GM12878 (cell line): ENCODE measurements at regions of chr6 and their contacts with region 1.

Region 1: DNA sequence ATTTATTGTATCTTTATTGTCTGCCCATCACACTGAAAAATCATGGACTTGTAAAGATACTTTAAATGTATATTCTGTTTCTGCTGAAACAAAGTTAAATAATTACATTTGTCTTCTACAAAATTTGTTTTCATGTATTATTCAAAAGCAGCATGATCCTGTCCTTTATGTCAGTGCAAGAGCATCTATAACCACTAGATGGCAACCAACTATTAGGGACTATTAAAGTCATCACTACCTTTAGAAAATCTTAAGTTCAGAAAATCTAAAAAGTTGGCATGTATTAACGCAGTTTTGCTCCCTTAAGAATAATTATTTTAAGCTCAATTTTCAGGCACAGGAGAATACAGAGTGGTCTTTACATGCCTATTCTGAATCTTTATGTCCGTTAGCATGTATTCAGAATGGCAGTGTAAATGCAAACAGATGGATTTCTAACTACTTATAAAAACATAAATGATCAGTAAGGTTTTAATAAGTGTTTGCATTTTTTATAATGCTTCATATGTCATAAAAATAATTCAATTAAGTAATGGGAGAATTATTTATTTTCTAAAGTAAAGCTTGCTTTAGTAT is 17.8 kb downstream of the TMEM30A start:
- DNase-seq: no peak
- ATAC-seq: peak; percentile 76
- H3K4me3 ChIP-seq: no peak overlapping the region
- H3K27ac ChIP-seq: no peak overlapping the region
- H3K4me1 ChIP-seq: no peaks in the 10 kb centered on the region
- H3K27me3 ChIP-seq: no peaks in the 10 kb centered on the region
- CTCF ChIP-seq: peak; percentile 65 to 74 (median 74); a peak in 5 of 6 replicates
- EP300 ChIP-seq: no peak
- POLR2A ChIP-seq: no peak
- RAD21 ChIP-seq: peak; percentile 82

Region 2: GRCh38 chr6:75130784-75131183 is 136.0 kb before region 1 on chr6:
- CTCF ChIA-PET with region 1: no interaction called
- POLR2A ChIA-PET with region 1: no interaction called
- RAD21 ChIA-PET with region 1: no interaction called
- SMC1A ChIA-PET with region 1: no interaction called
- in situ Hi-C with region 1: no loop called
- intact Hi-C with region 1: no loop called
- DNase-seq: no peak
- ATAC-seq: no peak
- H3K4me3 ChIP-seq: no peak overlapping the region
- H3K27ac ChIP-seq: no peak overlapping the region
- H3K4me1 ChIP-seq: no peaks in the 10 kb centered on the region
- H3K27me3 ChIP-seq: no peaks in the 10 kb centered on the region; a peak in 1 of 4 replicates
- CTCF ChIP-seq: no peak
- EP300 ChIP-seq: no peak
- POLR2A ChIP-seq: no peak
- RAD21 ChIP-seq: no peak

Region 3: GRCh38 chr6:75243333-75244062 is 23.3 kb before region 1 on chr6 and contains the start of gene COX7A2:
- CTCF ChIA-PET with region 1: interaction called, 14 read pairs
- POLR2A ChIA-PET with region 1: interaction called, 3 read pairs
- RAD21 ChIA-PET with region 1: interaction called, 6 read pairs
- SMC1A ChIA-PET with region 1: interaction called, 8 read pairs
- in situ Hi-C with region 1: no loop called
- intact Hi-C with region 1: no loop called
- DNase-seq: peak; percentile 86
- ATAC-seq: peak; percentile 94
- H3K4me3 ChIP-seq: peak within 1 kb of the TSS; percentile 65
- H3K27ac ChIP-seq: peak within 1 kb of the TSS; percentile 97
- H3K4me1 ChIP-seq: no peaks in the 10 kb centered on the region
- H3K27me3 ChIP-seq: no peaks in the 10 kb centered on the region
- CTCF ChIP-seq: no peak
- EP300 ChIP-seq: no peak; a peak in 3 of 4 replicates
- POLR2A ChIP-seq: peak; percentile 97
- RAD21 ChIP-seq: no peak
- polyA plus RNA-seq, gene COX7A2: 1,615 to 1,834 TPM

Region 4: DNA sequence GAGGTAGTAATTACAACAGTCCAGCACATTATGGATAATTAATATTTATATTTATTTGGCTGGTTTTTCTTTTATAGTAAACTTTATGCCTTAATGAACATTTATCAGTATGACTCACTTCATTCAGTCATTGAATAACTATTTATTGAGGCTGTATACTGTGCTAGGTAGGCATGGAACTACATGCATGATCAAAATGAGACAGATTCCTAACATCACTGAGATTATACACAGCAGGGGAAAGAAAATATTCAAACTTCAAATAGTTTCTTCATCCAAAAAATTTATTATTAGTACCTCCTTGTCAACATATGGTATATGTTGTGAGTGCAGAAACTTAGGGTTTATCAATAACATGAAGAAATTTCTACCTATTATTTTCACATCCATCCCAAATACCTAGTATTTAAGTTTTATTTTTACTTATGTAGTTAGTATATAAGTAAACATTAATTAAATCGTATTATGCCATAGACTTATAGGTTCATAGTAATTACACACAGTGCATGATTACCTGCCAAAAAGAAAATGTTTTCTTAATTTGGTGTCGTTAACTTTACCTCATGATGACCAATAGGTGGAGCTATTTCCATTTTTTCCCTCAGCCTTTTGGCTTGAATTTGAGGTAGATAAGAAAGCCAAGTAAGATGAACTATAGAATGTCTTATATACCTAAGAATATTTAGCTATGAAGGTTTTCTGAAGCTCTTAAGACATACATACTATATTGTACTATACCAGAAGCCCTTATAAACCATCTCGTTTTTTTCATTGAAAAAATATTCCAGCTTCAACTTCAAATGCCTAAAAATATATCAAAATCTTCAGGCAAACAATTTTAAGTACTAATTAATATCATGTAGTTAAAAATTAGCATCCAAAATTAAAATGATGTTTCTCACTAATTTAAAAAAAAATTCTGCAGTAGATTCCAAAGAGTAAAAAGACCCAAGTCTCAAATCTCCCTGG is 30.3 kb after region 1 on chr6:
- CTCF ChIA-PET with region 1: interaction called, 50 read pairs
- POLR2A ChIA-PET with region 1: interaction called, 3 read pairs
- RAD21 ChIA-PET with region 1: interaction called, 54 read pairs
- SMC1A ChIA-PET with region 1: interaction called, 18 read pairs
- in situ Hi-C with region 1: no loop called
- intact Hi-C with region 1: no loop called
- DNase-seq: no peak
- ATAC-seq: peak; percentile 87
- H3K4me3 ChIP-seq: no peak overlapping the region
- H3K27ac ChIP-seq: no peak overlapping the region
- H3K4me1 ChIP-seq: no peaks in the 10 kb centered on the region
- H3K27me3 ChIP-seq: no peaks in the 10 kb centered on the region
- CTCF ChIP-seq: peak; percentile 53 to 75 (median 59); a peak in 5 of 6 replicates
- EP300 ChIP-seq: no peak
- POLR2A ChIP-seq: no peak
- RAD21 ChIP-seq: peak; percentile 87

Region 5: GRCh38 chr6:75368151-75368779 is 101.5 kb after region 1 on chr6:
- CTCF ChIA-PET with region 1: interaction called, 40 read pairs
- POLR2A ChIA-PET with region 1: no interaction called
- RAD21 ChIA-PET with region 1: interaction called, 12 read pairs
- SMC1A ChIA-PET with region 1: interaction called, 17 read pairs
- in situ Hi-C with region 1: no loop called
- intact Hi-C with region 1: no loop called
- DNase-seq: no peak
- ATAC-seq: peak; percentile 88
- H3K4me3 ChIP-seq: no peak overlapping the region
- H3K27ac ChIP-seq: no peak overlapping the region
- H3K4me1 ChIP-seq: no peaks in the 10 kb centered on the region
- H3K27me3 ChIP-seq: no peaks in the 10 kb centered on the region
- CTCF ChIP-seq: peak; percentile 46 to 56 (median 50); a peak in 5 of 6 replicates
- EP300 ChIP-seq: no peak
- POLR2A ChIP-seq: no peak
- RAD21 ChIP-seq: peak; percentile 69

Region 6: DNA sequence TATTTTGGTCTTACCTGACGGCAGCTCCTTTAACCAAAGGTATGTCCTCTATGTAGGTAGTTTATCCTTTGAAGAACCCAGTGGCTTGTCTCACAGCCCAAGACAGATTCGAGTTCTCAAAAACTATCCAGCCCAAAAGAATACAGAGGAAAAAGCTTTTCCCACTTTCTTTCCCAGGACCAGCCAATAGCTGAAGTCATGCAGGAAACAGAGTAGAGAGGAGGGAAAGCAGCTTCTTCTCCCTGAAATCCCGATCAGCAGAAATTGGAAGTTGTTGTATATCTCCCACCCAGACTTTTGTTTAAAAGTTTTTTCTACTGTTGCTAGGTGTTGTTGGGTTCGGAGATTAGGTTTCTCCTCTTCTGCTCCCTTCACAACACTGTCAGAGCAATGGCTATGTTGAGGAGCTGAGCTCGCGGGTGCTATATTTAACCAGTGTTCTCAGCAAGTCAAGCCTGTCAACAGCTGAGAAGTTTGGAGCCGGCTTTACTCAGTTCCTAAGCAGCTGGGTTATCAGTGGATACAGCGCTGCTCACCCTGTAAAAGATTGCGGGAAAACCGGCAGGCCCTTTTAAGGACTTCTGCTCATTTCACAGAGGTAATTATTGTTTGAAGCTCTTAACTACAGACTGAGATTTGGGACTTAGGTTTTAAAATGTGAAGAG is 226.7 kb after region 1 on chr6 and contains the start of gene FILIP1:
- CTCF ChIA-PET with region 1: interaction called, 11 read pairs
- POLR2A ChIA-PET with region 1: no interaction called
- RAD21 ChIA-PET with region 1: interaction called, 6 read pairs
- SMC1A ChIA-PET with region 1: interaction called, 15 read pairs
- in situ Hi-C with region 1: no loop called
- intact Hi-C with region 1: no loop called
- DNase-seq: no peak
- ATAC-seq: peak; percentile 44
- H3K4me3 ChIP-seq: peak within 1 kb of the TSS; percentile 39; the same call in 1 of the 2 replicates
- H3K27ac ChIP-seq: peak within 1 kb of the TSS; percentile 63
- H3K4me1 ChIP-seq: peaks cover 27% of the 10 kb centered on the region
- H3K27me3 ChIP-seq: no peaks in the 10 kb centered on the region
- CTCF ChIP-seq: no peak
- EP300 ChIP-seq: no peak
- POLR2A ChIP-seq: no peak
- RAD21 ChIP-seq: no peak
- polyA plus RNA-seq, gene FILIP1: 0.23 to 0.33 TPM

Region 7: DNA sequence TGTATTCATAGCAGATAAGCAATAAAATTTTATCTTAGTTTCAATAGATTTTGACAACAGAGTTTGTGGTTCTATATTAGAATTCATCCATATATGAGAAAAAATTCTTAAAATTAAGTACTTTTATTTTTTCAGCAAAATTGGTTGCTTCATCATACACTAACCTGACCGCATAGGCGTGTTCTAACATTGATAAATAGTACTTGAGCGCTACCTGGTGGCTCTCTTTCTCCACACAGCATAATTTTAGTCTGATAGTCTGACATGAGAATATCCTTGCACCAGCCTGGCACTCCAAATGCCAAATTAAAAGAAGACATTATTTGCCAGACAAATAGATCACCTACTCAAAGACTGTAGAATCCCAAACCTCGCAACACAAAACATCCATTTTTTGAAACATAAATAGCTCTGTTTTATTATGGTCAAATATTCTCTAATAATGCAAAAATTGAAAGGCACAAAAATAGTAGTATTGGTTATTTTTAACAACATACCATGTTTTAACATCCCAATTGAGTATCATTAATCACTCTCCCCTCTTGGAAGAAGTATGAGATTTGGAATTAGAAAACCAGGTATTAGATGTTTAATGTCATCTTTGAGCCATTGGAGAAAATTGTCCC is 259.8 kb after region 1 on chr6:
- CTCF ChIA-PET with region 1: interaction called, 43 read pairs
- POLR2A ChIA-PET with region 1: no interaction called
- RAD21 ChIA-PET with region 1: interaction called, 17 read pairs
- SMC1A ChIA-PET with region 1: interaction called, 38 read pairs
- in situ Hi-C with region 1: no loop called
- intact Hi-C with region 1: loop called (anchors 1 kb)
- DNase-seq: peak; percentile 40
- ATAC-seq: peak; percentile 97
- H3K4me3 ChIP-seq: no peak overlapping the region
- H3K27ac ChIP-seq: no peak overlapping the region
- H3K4me1 ChIP-seq: no peaks in the 10 kb centered on the region
- H3K27me3 ChIP-seq: no peaks in the 10 kb centered on the region
- CTCF ChIP-seq: peak; percentile 61 to 78 (median 65)
- EP300 ChIP-seq: no peak
- POLR2A ChIP-seq: no peak
- RAD21 ChIP-seq: peak; percentile 95